Body of pancreas (tissue), 4 donors: ENCODE measurements at regions of chr12 and their contacts with region 1.

Region 1: DNA sequence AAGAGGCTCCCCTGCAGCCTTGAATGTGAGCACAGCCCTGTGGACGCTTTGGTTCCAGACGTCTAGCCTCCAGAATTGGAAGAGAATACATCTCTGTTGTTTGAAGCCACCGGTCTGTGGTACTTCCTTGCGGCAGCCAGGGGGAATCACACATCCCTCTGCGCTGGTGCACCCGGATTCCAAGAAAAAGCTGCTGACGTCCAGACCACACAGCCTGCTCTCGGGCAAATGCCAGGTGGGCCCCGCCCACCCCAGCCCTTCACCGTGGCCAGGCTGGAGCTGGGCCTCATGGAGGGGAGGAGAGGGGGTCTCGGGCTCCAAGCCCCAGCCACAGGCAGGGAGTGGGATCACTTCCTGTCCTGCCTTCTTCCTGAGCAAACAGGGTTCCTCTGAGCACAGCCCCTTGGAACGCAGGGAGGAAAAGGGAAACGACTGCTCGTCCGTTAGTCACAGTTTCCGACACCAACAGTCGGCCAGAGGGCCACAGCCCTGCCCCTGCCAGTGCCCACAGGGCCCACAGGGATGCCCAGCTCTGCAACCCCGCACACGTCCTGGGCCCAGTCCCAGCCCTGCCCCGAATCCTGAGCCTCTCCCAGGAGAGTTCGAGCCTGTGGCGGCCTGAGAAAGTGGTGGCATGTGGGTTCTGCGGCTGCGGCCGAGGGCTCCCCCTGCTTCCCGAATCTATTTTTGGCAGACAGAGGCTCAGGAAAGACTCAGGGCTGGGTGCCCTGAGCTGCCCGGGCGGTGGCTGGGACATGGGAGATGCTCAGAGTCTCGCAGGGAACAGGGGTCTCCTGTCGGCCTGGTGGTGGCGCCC is 85.3 kb downstream of the RFLNA start:
- DNase-seq: peak in 1 of 4 donors; percentile 57
- ATAC-seq: peak; percentile 11
- H3K4me3 ChIP-seq: no peak overlapping the region
- H3K27ac ChIP-seq: peak overlapping the region; percentile 67 to 82 (median 72)
- H3K4me1 ChIP-seq: peaks cover 24% of the 10 kb centered on the region
- H3K27me3 ChIP-seq: no peaks in the 10 kb centered on the region
- CTCF ChIP-seq: peak in 4 of 7 experiments; percentile 9 to 15 (median 13)
- POLR2A ChIP-seq: peak in 1 of 3 donors; percentile 27

Region 2: DNA sequence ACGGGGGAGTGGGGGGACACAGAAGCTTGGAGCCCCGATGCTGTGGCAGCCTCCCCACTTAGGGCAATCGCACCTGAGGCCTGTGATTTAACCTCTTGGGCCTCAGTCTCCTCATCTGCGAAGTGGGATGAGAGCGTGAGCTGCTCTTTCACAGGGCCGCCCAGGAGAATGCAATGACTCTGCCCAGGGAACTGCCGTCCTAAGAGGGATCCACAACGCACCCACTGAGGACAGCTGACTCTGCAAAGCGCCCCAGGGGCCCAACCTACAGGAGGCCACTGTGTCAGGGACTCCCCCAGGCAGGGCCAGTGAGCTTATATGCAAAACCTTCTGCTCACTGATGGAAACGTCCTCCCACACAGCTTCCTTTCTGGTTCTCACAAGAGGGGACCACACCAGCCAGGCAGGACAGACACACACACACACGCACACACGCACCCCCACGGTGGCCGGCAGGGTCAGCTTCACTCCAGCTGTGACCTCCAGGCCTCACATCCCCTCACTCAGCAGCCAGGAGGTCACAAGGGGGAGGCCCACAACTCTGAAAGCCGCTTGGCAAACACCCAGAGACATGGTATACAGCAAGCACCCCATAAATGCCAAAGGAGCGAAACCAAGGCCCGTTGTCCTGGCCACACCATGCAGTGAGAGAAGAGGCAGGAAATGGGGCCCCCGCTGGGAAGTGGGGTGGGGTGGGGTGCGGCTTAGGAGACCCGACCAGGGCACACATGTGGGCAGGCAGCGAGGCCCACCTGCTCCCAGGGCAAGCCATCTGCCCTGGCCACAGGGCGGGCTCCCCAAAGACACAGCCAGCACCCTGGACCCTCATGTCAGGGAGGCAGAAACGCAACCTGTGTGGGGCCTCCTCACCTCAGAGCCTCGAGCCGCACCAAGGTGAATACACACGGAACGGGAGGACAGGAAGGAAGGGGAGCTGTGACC is 113.9 kb after region 1 on chr12:
- intact Hi-C with region 1: loop called (anchors 10 kb)
- DNase-seq: no peak
- ATAC-seq: no peak
- H3K4me3 ChIP-seq: no peak overlapping the region
- H3K27ac ChIP-seq: no peak overlapping the region
- H3K4me1 ChIP-seq: peaks cover 55% of the 10 kb centered on the region
- H3K27me3 ChIP-seq: no peaks in the 10 kb centered on the region
- CTCF ChIP-seq: no peak
- POLR2A ChIP-seq: no peak